Posterior vena cava (tissue), 2 donors: ENCODE measurements at regions of chr18 and their contacts with region 1.

Region 1: DNA sequence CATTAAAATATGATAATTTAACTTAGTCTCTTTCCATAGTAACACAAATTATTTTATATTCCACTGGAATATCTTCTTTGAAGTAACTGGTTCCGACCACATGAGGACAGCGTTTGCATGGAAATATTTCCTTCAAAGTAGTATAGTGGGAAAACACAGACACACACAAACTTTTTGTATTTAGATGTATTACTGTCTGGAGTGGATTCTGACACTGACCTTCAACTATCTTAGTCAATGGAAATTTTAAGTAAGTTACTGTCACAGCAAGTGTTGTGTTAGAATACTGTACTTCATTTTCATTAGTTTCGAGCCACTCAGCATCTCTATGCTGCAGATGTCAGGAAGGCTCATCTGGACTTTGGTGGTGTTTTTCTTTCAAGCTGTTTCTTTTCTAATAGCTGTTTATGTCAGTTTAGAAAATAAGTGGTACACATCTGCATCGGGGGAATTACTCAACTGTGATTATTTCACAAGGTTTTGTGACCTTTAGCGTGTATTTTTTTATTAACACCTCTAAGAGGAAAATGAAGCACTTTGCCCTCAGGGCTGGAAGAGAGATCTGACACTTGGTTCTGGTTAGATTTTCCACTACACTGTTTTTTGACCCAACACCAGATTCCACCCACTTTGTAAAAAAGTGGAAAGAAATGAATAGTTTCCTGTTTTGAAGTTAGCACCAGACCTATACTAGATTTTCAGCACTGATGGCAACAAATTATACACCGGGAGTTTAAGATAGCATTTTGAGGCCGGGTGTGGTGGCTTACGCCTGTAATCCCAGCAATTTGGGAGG is 18.9 kb upstream of the THOC1 start:
- DNase-seq: no peak

Region 2: GRCh38 chr18:616380-616995 is 329.8 kb after region 1 on chr18:
- intact Hi-C with region 1: loop called (anchors 5 to 10 kb)
- DNase-seq: no peak

Region 3: DNA sequence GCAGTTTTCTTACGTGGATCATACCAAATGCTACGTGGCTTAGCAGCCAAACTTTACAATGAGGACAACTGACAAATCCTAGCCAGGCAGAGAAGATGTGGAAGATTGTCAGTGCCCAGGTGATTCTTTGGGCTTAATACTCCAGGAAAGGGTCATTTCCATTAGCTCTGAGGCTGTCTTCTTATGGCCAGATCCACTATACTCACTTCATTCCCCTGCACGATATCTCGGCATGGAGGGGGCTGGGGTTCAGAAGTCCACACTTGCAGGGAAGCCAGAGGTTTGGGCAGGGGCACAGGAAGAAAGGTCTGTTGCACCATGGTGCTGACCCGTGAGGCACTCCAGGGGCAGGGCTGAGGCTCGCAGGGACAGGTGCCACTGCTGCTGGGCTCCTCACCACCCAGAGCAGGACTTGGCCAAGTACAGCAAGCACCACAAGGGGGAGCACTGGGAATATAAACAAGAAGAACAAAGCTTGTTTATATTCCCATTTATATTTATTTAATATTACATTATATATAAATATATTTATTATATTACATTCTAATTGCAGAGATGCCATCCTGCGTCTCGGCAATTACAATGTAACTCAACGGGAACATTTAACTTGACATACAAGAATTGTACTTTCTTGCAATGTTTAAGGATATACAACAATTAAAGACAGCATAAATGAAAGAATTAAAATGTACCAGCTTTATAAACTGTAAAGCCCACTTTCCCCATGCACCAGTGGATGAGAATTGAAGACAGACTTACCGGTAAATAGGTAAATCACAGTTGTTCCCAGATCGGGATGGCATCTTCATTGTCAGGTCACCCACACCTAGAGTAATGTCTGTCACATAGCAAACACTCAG is 337.3 kb after region 1 on chr18:
- intact Hi-C with region 1: loop called (anchors 5 to 10 kb)
- DNase-seq: peak; percentile 85